PC-3 (cell line): ENCODE measurements at regions of chr12 and their contacts with region 1.

Region 1: DNA sequence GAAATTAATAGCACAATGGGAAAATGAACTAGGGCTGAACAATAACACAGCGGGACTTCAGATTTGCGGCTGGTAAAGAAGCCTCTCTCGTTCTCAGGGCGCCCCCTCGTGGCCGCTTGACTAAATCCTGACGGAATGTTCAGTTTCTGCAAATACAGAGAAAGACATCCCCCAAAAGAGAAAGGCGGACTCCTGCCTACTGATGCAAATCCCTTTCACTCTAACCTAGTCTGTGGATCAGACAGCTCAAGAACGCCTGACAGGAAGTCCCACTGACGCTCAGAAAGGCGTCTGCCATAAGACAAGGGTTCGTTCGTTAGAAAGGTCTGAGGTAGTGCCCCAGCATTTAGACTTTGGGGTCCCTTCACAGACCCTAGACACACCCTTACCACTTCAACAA is 2.5 kb downstream of the NUAK1 start:
- DNase-seq: peak; percentile 95
- ATAC-seq: peak; percentile 27
- H3K4me3 ChIP-seq: peak overlapping the region; percentile 82
- H3K27ac ChIP-seq: peak overlapping the region; percentile 64
- H3K4me1 ChIP-seq: peaks cover 62% of the 10 kb centered on the region
- H3K27me3 ChIP-seq: no peaks in the 10 kb centered on the region
- CTCF ChIP-seq: peak; percentile 98

Region 2: DNA sequence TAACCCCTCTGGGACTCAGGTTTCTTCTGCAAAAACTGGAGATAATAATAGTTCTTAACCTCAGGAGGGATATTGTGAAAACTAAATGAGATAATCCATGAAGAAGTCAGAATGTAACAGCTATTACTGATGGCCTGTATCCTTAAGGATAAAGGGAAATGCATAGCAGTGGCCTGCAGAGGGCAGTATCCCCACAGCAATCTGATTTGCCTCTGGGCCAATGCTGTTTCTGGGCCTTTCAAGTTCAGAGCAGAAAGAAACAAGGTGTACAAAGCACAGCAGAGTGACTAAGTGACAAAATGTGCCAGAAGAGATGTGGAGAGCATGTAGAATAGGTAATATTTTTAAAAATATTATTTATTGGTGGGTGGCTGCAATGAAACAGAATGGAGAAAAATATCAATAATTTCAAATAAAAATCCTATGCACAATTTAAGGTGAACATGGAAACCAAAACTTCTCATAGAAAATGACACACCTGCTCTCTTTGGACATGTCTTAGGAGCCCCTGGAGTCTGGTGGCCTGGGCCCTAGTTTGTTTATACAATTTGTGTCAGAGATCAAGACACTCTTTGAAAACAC is 715.5 kb before region 1 on chr12:
- CTCF ChIA-PET with region 1: interaction called, 17 read pairs
- POLR2A ChIA-PET with region 1: no interaction called
- intact Hi-C with region 1: loop called (anchors 1 kb)
- DNase-seq: peak; percentile 90
- ATAC-seq: peak; percentile 84
- H3K4me3 ChIP-seq: no peak overlapping the region
- H3K27ac ChIP-seq: no peak overlapping the region
- H3K4me1 ChIP-seq: peaks cover 9% of the 10 kb centered on the region
- H3K27me3 ChIP-seq: no peaks in the 10 kb centered on the region
- CTCF ChIP-seq: peak; percentile 98

Region 3: GRCh38 chr12:105499205-105499604 is 637.1 kb before region 1 on chr12:
- CTCF ChIA-PET with region 1: no interaction called
- POLR2A ChIA-PET with region 1: no interaction called
- intact Hi-C with region 1: loop called (anchors 1 kb)
- DNase-seq: no peak
- ATAC-seq: peak; percentile 42; the same call in 1 of the 2 replicates
- H3K4me3 ChIP-seq: no peak overlapping the region
- H3K27ac ChIP-seq: no peak overlapping the region
- H3K4me1 ChIP-seq: no peaks in the 10 kb centered on the region
- H3K27me3 ChIP-seq: no peaks in the 10 kb centered on the region
- CTCF ChIP-seq: peak; percentile 31; the same call in 1 of the 2 replicates

Region 4: DNA sequence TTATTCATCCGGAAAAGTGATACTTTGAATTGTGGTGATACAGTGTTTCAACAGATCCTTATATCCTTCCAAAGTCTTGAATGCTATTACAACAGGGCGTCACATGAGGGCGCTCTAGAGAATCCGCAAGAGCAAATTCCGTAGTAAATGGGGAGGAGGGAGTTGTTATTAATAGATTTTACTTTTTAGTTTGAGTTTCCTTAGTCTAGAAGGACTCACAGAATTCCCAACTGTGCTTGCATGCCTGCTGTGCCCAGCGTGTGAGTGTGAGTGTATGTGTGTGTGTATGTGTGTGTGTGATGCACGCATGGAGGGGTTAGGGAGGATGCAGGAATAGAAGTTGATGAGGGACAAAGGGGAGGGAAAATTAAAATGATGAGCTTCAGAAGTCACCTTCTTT is 430.5 kb before region 1 on chr12:
- CTCF ChIA-PET with region 1: no interaction called
- POLR2A ChIA-PET with region 1: no interaction called
- intact Hi-C with region 1: loop called (anchors 1 kb)
- DNase-seq: peak; percentile 61
- ATAC-seq: peak; percentile 46
- H3K4me3 ChIP-seq: no peak overlapping the region
- H3K27ac ChIP-seq: no peak overlapping the region
- H3K4me1 ChIP-seq: peaks cover 22% of the 10 kb centered on the region
- H3K27me3 ChIP-seq: no peaks in the 10 kb centered on the region
- CTCF ChIP-seq: peak; percentile 97

Region 5: GRCh38 chr12:105934274-105934673 is 202.0 kb before region 1 on chr12:
- CTCF ChIA-PET with region 1: no interaction called
- POLR2A ChIA-PET with region 1: no interaction called
- intact Hi-C with region 1: loop called (anchors 2 kb)
- DNase-seq: peak; percentile 99
- ATAC-seq: peak; percentile 97
- H3K4me3 ChIP-seq: peak overlapping the region; percentile 30; the same call in 1 of the 2 replicates
- H3K27ac ChIP-seq: peak overlapping the region; percentile 60
- H3K4me1 ChIP-seq: peaks cover 25% of the 10 kb centered on the region
- H3K27me3 ChIP-seq: no peaks in the 10 kb centered on the region
- CTCF ChIP-seq: no peak

Region 6: GRCh38 chr12:106090591-106091411 is 45.5 kb before region 1 on chr12:
- CTCF ChIA-PET with region 1: interaction called, 5 read pairs
- POLR2A ChIA-PET with region 1: no interaction called
- intact Hi-C with region 1: loop called (anchors 2 kb)
- DNase-seq: peak; percentile 80
- ATAC-seq: peak; percentile 75
- H3K4me3 ChIP-seq: no peak overlapping the region
- H3K27ac ChIP-seq: peak overlapping the region; percentile 63
- H3K4me1 ChIP-seq: peaks cover 38% of the 10 kb centered on the region
- H3K27me3 ChIP-seq: no peaks in the 10 kb centered on the region
- CTCF ChIP-seq: no peak

Region 7: DNA sequence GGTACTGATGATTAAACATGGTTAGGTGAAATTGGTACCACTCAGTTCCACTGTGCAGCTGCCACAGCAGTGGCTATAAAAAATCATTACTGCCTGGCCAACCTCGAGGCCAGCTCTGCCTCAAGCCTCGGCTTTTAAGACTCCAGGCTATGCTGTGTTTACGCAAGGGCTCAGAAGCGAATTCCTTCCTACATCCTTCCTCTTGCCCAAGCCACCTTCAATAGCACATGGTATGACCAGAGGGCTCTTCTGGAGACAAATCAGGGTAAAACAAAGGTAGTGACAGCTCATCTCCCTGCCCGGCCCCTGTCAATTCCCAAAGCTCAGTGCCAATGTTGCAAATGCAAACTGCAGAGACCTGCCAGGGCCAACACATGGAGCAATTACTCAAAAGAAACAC is 29.4 kb before region 1 on chr12:
- CTCF ChIA-PET with region 1: no interaction called
- POLR2A ChIA-PET with region 1: no interaction called
- intact Hi-C with region 1: no loop called
- DNase-seq: peak; percentile 87
- ATAC-seq: peak; percentile 61
- H3K4me3 ChIP-seq: no peak overlapping the region
- H3K27ac ChIP-seq: peak overlapping the region; percentile 49
- H3K4me1 ChIP-seq: peaks cover 33% of the 10 kb centered on the region
- H3K27me3 ChIP-seq: no peaks in the 10 kb centered on the region
- CTCF ChIP-seq: no peak